Common myeloid progenitor, CD34-positive (primary cell): ENCODE measurements at regions of chr14 and their contacts with region 1.

Region 1: GRCh38 chr14:76908834-76909233 is 82.6 kb downstream of the LRRC74A start:
- DNase-seq: peak; percentile 95 to 99 (median 99)
- H3K4me3 ChIP-seq: peak overlapping the region in 2 of 7 experiments; percentile 24 to 28
- H3K27ac ChIP-seq: peak overlapping the region; percentile 56 to 79
- H3K4me1 ChIP-seq: peaks cover 2 to 38% (median 21%) of the 10 kb centered on the region in 4 experiments
- H3K27me3 ChIP-seq: no peaks in the 10 kb centered on the region

Region 2: GRCh38 chr14:77059276-77059915 is 150.6 kb after region 1 on chr14:
- CTCF ChIA-PET with region 1: interaction called, 421 read pairs
- POLR2A ChIA-PET with region 1: no interaction called
- DNase-seq: peak in 1 of 3 donors; percentile 46
- H3K4me3 ChIP-seq: no peak overlapping the region
- H3K27ac ChIP-seq: no peak overlapping the region
- H3K4me1 ChIP-seq: peaks cover 0 to 8% (median 0%) of the 10 kb centered on the region in 4 experiments
- H3K27me3 ChIP-seq: no peaks in the 10 kb centered on the region